ENCODE measurements at regions of chr9 and their contacts with region 1.

Region 1: GRCh38 chr9:101601904-101602765 is 7.4 kb upstream of the PPP3R2 start:
- DNase-seq: no peak
- ATAC-seq: peak in 2 of 4 donors; percentile 53 to 60
- H3K4me3 ChIP-seq: no peak overlapping the region
- H3K27ac ChIP-seq: no peak overlapping the region
- H3K4me1 ChIP-seq: peaks cover 0 to 4% (median 0%) of the 10 kb centered on the region in 12 donors
- H3K27me3 ChIP-seq: peaks cover 0 to 13% (median 0%) of the 10 kb centered on the region in 9 donors
- CTCF ChIP-seq: peak; percentile 50 to 74 (median 59)
- POLR2A ChIP-seq: no peak

Region 2: DNA sequence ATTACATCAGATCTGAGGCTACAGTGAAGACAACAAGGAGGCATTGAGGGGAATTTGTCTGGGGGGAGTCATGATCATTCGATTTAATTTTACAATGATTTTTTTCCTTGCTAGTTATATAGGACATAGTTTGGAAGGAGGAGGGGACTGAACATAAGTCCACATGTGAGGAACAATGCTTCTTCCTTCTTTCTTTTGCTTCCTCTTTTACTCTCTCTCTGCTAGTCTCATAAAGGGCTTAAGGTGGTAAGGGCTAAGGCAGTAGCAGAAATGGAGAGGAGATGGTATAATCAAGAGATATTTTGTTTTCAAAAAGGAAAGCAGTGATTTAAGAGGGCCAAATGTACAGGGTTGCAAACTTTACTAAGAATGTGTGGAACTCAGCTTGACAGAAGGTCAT is 72.0 kb after region 1 on chr9:
- intact Hi-C with region 1: no loop called
- DNase-seq: no peak
- ATAC-seq: no peak
- H3K4me3 ChIP-seq: no peak overlapping the region
- H3K27ac ChIP-seq: no peak overlapping the region
- H3K4me1 ChIP-seq: peaks cover 0 to 13% (median 0%) of the 10 kb centered on the region in 12 donors
- H3K27me3 ChIP-seq: no peaks in the 10 kb centered on the region
- CTCF ChIP-seq: no peak
- POLR2A ChIP-seq: no peak

Region 3: GRCh38 chr9:101691657-101692056 is 89.5 kb after region 1 on chr9:
- intact Hi-C with region 1: loop called in 1 of 10 experiments (anchors 10 kb)
- DNase-seq: no peak
- ATAC-seq: no peak
- H3K4me3 ChIP-seq: no peak overlapping the region
- H3K27ac ChIP-seq: no peak overlapping the region
- H3K4me1 ChIP-seq: peaks cover 0 to 17% (median 0%) of the 10 kb centered on the region in 12 donors
- H3K27me3 ChIP-seq: no peaks in the 10 kb centered on the region
- CTCF ChIP-seq: no peak
- POLR2A ChIP-seq: no peak

Region 4: GRCh38 chr9:101727612-101728524 is 125.7 kb after region 1 on chr9:
- intact Hi-C with region 1: loop called in 8 of 10 experiments (anchors 2 to 10 kb)
- DNase-seq: no peak
- ATAC-seq: no peak
- H3K4me3 ChIP-seq: no peak overlapping the region
- H3K27ac ChIP-seq: no peak overlapping the region
- H3K4me1 ChIP-seq: no peaks in the 10 kb centered on the region
- H3K27me3 ChIP-seq: peaks cover 0 to 17% (median 0%) of the 10 kb centered on the region in 9 donors
- CTCF ChIP-seq: peak in 11 of 12 donors; percentile 18 to 51 (median 35)
- POLR2A ChIP-seq: no peak

Region 5: GRCh38 chr9:101738566-101739183 is 136.5 kb after region 1 on chr9 and contains the start of gene GRIN3A:
- intact Hi-C with region 1: loop called in 2 of 10 experiments (anchors 10 kb)
- DNase-seq: peak in 4 of 5 donors; percentile 24 to 70 (median 50)
- ATAC-seq: peak in 3 of 4 donors; percentile 67 to 87 (median 69)
- H3K4me3 ChIP-seq: peak within 1 kb of the TSS; percentile 19 to 62 (median 47)
- H3K27ac ChIP-seq: peak within 1 kb of the TSS in 2 of 12 donors; percentile 21 to 22
- H3K4me1 ChIP-seq: peaks cover 0 to 18% (median 12%) of the 10 kb centered on the region in 12 donors
- H3K27me3 ChIP-seq: peaks cover 17 to 61% (median 38%) of the 10 kb centered on the region in 9 donors
- CTCF ChIP-seq: peak in 6 of 12 donors; percentile 7 to 41 (median 31)
- POLR2A ChIP-seq: no peak
- total RNA-seq, gene GRIN3A: 0.09 to 1.4 (median 0.32) TPM

Measured in heart left ventricle (tissue), 16 donors.